GM12878 (cell line): ENCODE measurements at regions of chr2 and their contacts with region 1.

Region 1: DNA sequence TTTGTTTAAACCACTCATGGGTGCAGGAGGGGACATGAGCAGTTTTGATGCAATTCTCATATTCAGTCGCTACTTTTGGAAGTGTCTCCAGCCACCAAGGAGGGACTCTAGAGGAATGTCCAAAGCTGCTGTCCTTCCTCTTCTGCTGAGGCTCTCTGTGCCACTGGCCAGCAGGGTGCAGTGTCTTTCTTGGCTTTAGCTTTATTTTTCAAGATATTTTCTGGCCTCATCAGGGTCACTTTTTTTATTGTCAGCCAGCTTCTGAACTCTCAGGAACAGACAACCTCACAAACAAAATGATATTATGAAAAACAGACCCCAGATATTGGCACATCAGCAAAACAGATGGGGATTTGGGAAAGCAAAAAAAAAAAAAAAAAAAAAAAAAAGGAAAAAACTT is 289.3 kb upstream of the ZSWIM2 start:
- DNase-seq: no peak
- ATAC-seq: peak; percentile 91
- H3K4me3 ChIP-seq: no peak overlapping the region
- H3K27ac ChIP-seq: no peak overlapping the region
- H3K4me1 ChIP-seq: no peaks in the 10 kb centered on the region
- H3K27me3 ChIP-seq: no peaks in the 10 kb centered on the region
- CTCF ChIP-seq: peak; percentile 54 to 67 (median 65)
- EP300 ChIP-seq: no peak
- POLR2A ChIP-seq: no peak
- RAD21 ChIP-seq: peak; percentile 77

Region 2: DNA sequence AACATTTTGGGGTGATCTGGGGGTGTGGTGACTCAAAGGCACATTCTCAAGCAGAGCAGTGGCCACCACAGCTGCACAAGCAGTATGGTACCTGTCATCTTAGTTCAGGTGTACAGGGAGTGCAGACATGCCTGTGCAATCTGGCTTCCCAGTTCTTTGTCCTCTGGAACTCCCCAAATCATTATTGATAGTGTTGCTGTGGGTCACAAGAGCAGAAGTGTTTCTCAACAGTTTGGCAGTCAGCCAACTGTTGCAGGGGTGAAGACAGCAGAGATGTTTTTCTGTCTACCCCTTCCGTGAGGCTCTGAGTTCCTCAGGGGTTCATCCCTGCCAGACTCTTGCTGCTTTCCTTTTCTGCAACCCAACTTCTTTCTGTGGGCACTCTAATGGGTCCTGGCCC is 82.8 kb before region 1 on chr2:
- CTCF ChIA-PET with region 1: no interaction called
- POLR2A ChIA-PET with region 1: no interaction called
- RAD21 ChIA-PET with region 1: no interaction called
- SMC1A ChIA-PET with region 1: no interaction called
- in situ Hi-C with region 1: no loop called
- intact Hi-C with region 1: no loop called
- DNase-seq: no peak
- ATAC-seq: no peak
- H3K4me3 ChIP-seq: no peak overlapping the region
- H3K27ac ChIP-seq: no peak overlapping the region
- H3K4me1 ChIP-seq: no peaks in the 10 kb centered on the region
- H3K27me3 ChIP-seq: no peaks in the 10 kb centered on the region; a peak in 2 of 4 replicates
- CTCF ChIP-seq: no peak
- EP300 ChIP-seq: no peak
- POLR2A ChIP-seq: no peak
- RAD21 ChIP-seq: no peak

Region 3: GRCh38 chr2:187299122-187299906 is 161.0 kb after region 1 on chr2:
- CTCF ChIA-PET with region 1: interaction called, 7 read pairs
- POLR2A ChIA-PET with region 1: no interaction called
- RAD21 ChIA-PET with region 1: interaction called, 3 read pairs
- SMC1A ChIA-PET with region 1: interaction called, 3 read pairs
- in situ Hi-C with region 1: no loop called
- intact Hi-C with region 1: loop called (anchors 5 kb)
- DNase-seq: no peak
- ATAC-seq: peak; percentile 79
- H3K4me3 ChIP-seq: no peak overlapping the region
- H3K27ac ChIP-seq: no peak overlapping the region
- H3K4me1 ChIP-seq: no peaks in the 10 kb centered on the region
- H3K27me3 ChIP-seq: no peaks in the 10 kb centered on the region
- CTCF ChIP-seq: peak; percentile 32 to 49 (median 38); a peak in 4 of 6 replicates
- EP300 ChIP-seq: no peak
- POLR2A ChIP-seq: no peak
- RAD21 ChIP-seq: peak; percentile 69